Activated CD8-positive, alpha-beta memory T cell treated with anti-CD3 and anti-CD28 coated beads, Interleukin-2, amount 10 ng/mL, durations not matched to agents 7 days and 5 days (primary cell): ENCODE measurements at regions of chr6 and their contacts with region 1.

Region 1: DNA sequence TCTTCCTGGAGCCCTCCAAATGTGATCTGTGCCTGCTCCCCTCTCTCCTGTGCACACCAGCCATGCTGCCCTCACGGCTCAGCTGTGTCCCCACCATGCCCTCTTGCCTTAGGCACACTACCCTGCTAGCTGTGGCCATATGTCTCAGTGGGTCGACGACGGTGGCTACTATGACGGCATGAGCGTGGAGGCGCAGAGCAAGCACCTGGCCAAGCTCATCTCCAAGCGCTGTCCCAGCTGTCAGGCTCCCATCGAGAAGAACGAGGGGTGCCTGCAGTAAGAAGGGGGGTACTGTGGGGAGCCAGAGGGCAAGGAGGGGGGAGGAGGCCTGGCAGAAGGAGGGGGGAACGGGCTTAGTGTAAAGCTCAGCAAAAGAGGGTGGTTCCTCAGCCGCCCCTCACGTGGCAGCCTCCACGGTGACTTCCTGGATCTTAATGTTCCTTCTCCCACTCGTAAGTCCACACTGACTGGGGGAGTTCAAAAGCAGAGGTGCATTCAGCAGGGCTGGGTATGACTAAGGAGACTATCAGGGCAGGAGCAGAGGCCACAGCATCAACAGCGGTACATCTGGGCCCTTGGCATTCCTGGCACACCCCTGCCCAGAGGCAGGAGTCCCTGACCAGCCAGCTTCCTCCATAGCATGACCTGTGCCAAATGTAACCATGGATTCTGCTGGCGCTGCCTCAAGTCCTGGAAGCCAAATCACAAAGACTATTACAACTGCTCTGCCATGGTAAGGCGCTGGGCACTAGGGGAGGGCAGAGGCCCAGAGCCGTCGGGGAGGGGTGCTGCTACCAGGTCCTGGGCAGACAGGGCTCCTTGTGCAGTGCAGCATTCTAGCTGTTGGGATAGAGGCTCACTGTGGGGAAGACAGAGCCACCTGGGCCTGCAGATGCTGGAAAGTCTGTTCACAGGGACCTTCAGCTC is 8.0 kb downstream of the DNPH1 start:
- DNase-seq: no peak
- ATAC-seq: no peak
- H3K4me3 Mint-ChIP-seq: no peak overlapping the region
- H3K27ac Mint-ChIP-seq: peak overlapping the region; percentile 48
- H3K4me1 Mint-ChIP-seq: peaks cover 31% of the 10 kb centered on the region
- H3K27me3 Mint-ChIP-seq: no peaks in the 10 kb centered on the region

Region 2: GRCh38 chr6:43138267-43138666 is 83.0 kb before region 1 on chr6:
- CTCF ChIA-PET with region 1: no interaction called
- DNase-seq: no peak
- ATAC-seq: no peak
- H3K4me3 Mint-ChIP-seq: no peak overlapping the region
- H3K27ac Mint-ChIP-seq: no peak overlapping the region
- H3K4me1 Mint-ChIP-seq: peaks cover 8% of the 10 kb centered on the region
- H3K27me3 Mint-ChIP-seq: no peaks in the 10 kb centered on the region

Region 3: DNA sequence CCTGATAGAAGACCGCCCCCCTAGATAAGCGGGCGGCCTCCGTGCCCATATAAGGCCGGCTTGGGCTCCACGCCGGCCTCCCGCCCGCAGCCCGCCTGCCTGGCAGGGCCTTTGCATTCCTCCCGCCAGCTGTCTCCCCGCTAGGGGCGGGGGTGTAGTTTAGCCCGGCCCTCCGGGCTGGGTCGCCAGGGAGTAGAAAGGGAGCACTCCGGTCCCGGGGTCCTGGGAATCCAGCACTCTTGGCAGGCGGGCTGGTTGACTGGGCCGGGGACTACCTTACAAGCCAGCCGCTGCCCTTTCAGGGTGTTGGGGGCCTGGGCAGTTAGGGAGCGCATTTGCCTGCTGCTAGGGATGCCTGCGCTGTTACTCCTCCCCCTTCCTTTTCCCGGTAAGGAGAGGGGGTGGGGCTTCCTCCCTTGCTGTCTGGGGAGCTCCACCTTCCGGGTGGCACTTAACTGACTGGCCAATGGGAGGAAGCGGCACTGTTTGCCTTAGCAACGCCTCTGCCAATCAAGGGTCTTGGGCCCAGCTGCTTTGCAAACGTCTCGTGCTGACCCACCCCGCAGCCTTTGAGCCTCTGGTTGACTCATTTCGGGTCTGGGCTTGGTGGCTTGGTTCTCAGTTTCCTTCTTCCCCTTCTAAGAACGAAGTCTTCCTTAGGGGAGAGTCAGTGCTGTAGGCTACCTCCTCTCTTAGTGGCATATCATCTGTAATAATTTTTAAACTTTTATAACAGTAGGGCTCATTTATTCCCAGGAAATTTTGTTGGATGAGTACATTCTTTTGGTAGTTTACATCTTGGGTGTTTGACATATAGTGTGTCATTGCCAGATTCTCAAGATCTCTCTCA is 46.8 kb before region 1 on chr6:
- CTCF ChIA-PET with region 1: interaction called, 11 read pairs
- DNase-seq: peak; percentile 100
- ATAC-seq: peak; percentile 71
- H3K4me3 Mint-ChIP-seq: peak overlapping the region; percentile 100
- H3K27ac Mint-ChIP-seq: peak overlapping the region; percentile 91
- H3K4me1 Mint-ChIP-seq: peaks cover 51% of the 10 kb centered on the region
- H3K27me3 Mint-ChIP-seq: no peaks in the 10 kb centered on the region